T-cell (primary cell): ENCODE measurements at regions of chr3 and their contacts with region 1.

Region 1: GRCh38 chr3:120147072-120147871 is 53.0 kb upstream of the GSK3B start:
- DNase-seq: peak; percentile 15 to 77 (median 53)
- ATAC-seq: peak; percentile 83 to 99 (median 93)
- H3K4me3 ChIP-seq: no peak overlapping the region
- H3K4me3 Mint-ChIP-seq: no peak overlapping the region
- H3K27ac ChIP-seq: no peak overlapping the region
- H3K27ac Mint-ChIP-seq: peak overlapping the region in 1 of 2 donors; percentile 52
- H3K4me1 ChIP-seq: peaks cover 7 to 19% of the 10 kb centered on the region in 2 experiments
- H3K4me1 Mint-ChIP-seq: peaks cover 12 to 23% (median 13%) of the 10 kb centered on the region in 3 donors
- H3K27me3 ChIP-seq: no peaks in the 10 kb centered on the region
- H3K27me3 Mint-ChIP-seq: no peaks in the 10 kb centered on the region

Region 2: GRCh38 chr3:119420196-119420595 is 727.1 kb before region 1 on chr3:
- CTCF ChIA-PET with region 1: no interaction called
- POLR2A ChIA-PET with region 1: no interaction called
- DNase-seq: peak in 1 of 35 experiments; percentile 12
- ATAC-seq: no peak
- H3K4me3 ChIP-seq: no peak overlapping the region
- H3K4me3 Mint-ChIP-seq: no peak overlapping the region
- H3K27ac ChIP-seq: no peak overlapping the region
- H3K27ac Mint-ChIP-seq: no peak overlapping the region
- H3K4me1 ChIP-seq: no peaks in the 10 kb centered on the region
- H3K4me1 Mint-ChIP-seq: peaks cover 8 to 13% (median 10%) of the 10 kb centered on the region in 3 donors
- H3K27me3 ChIP-seq: no peaks in the 10 kb centered on the region
- H3K27me3 Mint-ChIP-seq: no peaks in the 10 kb centered on the region

Region 3: GRCh38 chr3:119891944-119892721 is 255.1 kb before region 1 on chr3:
- CTCF ChIA-PET with region 1: interaction called, 55 to 73 read pairs
- POLR2A ChIA-PET with region 1: interaction called in 1 of 2 experiments, 3 read pairs
- DNase-seq: peak in 32 of 35 experiments; percentile 1 to 78 (median 22)
- ATAC-seq: peak; percentile 52 to 70 (median 62)
- H3K4me3 ChIP-seq: no peak overlapping the region
- H3K4me3 Mint-ChIP-seq: no peak overlapping the region
- H3K27ac ChIP-seq: no peak overlapping the region
- H3K27ac Mint-ChIP-seq: peak overlapping the region in 1 of 2 donors; percentile 40
- H3K4me1 ChIP-seq: no peaks in the 10 kb centered on the region
- H3K4me1 Mint-ChIP-seq: peaks cover 10 to 23% (median 12%) of the 10 kb centered on the region in 3 donors
- H3K27me3 ChIP-seq: no peaks in the 10 kb centered on the region
- H3K27me3 Mint-ChIP-seq: no peaks in the 10 kb centered on the region

Region 4: GRCh38 chr3:119964294-119964693 is 183.0 kb before region 1 on chr3:
- CTCF ChIA-PET with region 1: interaction called, 4 to 16 read pairs
- POLR2A ChIA-PET with region 1: no interaction called
- DNase-seq: no peak
- ATAC-seq: no peak
- H3K4me3 ChIP-seq: no peak overlapping the region
- H3K4me3 Mint-ChIP-seq: no peak overlapping the region
- H3K27ac ChIP-seq: no peak overlapping the region
- H3K27ac Mint-ChIP-seq: no peak overlapping the region
- H3K4me1 ChIP-seq: no peaks in the 10 kb centered on the region
- H3K4me1 Mint-ChIP-seq: peaks cover 39 to 60% (median 41%) of the 10 kb centered on the region in 3 donors
- H3K27me3 ChIP-seq: no peaks in the 10 kb centered on the region
- H3K27me3 Mint-ChIP-seq: no peaks in the 10 kb centered on the region

Region 5: DNA sequence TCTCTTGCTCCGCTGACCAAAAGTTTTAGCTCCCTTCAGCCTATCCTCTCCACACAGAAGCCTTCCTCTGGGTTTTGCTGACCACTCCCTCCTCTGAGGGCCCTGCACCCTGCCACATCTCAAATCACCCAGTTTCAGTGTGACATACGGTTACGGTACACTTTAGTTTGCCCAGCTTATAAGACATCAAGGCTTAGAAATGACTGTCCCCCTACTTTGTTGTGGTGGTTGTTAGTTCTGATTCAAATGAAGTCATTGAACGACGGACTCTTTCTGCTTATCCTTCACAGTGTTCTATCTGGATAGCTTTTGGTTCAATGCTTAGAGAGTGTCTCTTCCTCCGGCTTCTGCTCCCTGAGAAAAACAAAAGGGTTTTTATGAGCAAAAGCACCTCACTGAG is 380.9 kb after region 1 on chr3:
- CTCF ChIA-PET with region 1: no interaction called
- POLR2A ChIA-PET with region 1: no interaction called
- DNase-seq: no peak
- ATAC-seq: no peak
- H3K4me3 ChIP-seq: no peak overlapping the region
- H3K4me3 Mint-ChIP-seq: no peak overlapping the region
- H3K27ac ChIP-seq: no peak overlapping the region
- H3K27ac Mint-ChIP-seq: no peak overlapping the region
- H3K4me1 ChIP-seq: no peaks in the 10 kb centered on the region
- H3K4me1 Mint-ChIP-seq: no peaks in the 10 kb centered on the region
- H3K27me3 ChIP-seq: no peaks in the 10 kb centered on the region
- H3K27me3 Mint-ChIP-seq: peaks cover 10 to 13% of the 10 kb centered on the region in 2 donors